Activated CD4-positive, alpha-beta memory T cell treated with anti-CD3 and anti-CD28 coated beads, Interleukin-2, amount 10 ng/mL, durations not matched to agents 7 days and 5 days (primary cell): ENCODE measurements at regions of chr1 and their contacts with region 1.

Region 1: GRCh38 chr1:203267347-203267846 is 37.9 kb upstream of the BTG2 start:
- DNase-seq: peak; percentile 86
- H3K4me3 Mint-ChIP-seq: peak overlapping the region; percentile 76
- H3K27ac Mint-ChIP-seq: peak overlapping the region; percentile 55
- H3K4me1 Mint-ChIP-seq: peaks cover 22% of the 10 kb centered on the region
- H3K27me3 Mint-ChIP-seq: peaks cover 6% of the 10 kb centered on the region

Region 2: GRCh38 chr1:203351037-203352013 is 83.9 kb after region 1 on chr1 and contains the start of gene FMOD:
- CTCF ChIA-PET with region 1: interaction called, 512 read pairs
- POLR2A ChIA-PET with region 1: no interaction called
- DNase-seq: no peak
- H3K4me3 Mint-ChIP-seq: no peak within 1 kb of the TSS
- H3K27ac Mint-ChIP-seq: no peak within 1 kb of the TSS
- H3K4me1 Mint-ChIP-seq: peaks cover 2% of the 10 kb centered on the region
- H3K27me3 Mint-ChIP-seq: peaks cover 36% of the 10 kb centered on the region
- total RNA-seq, gene FMOD: 0.23 to 0.45 TPM

Region 3: DNA sequence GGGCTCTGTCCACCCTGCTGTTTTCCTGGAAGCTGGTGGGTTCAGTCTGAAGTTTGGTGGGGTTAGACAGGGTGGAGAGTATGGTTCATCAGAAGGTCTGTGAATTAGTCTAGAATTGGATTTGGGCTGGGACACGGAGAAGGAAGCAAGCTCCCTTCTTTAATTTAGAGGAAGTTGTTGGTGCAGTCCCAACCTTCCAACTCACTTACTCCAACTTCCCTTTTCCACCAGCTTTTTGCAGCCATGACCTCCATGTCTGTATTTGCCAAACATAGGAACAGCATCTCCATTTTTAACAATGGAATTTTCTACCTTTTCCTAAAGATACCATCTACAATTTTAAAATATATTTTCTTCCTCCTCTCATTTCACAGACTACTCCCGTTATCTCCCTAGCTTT is 179.8 kb after region 1 on chr1:
- CTCF ChIA-PET with region 1: interaction called, 10 read pairs
- POLR2A ChIA-PET with region 1: no interaction called
- DNase-seq: no peak
- H3K4me3 Mint-ChIP-seq: no peak overlapping the region
- H3K27ac Mint-ChIP-seq: no peak overlapping the region
- H3K4me1 Mint-ChIP-seq: no peaks in the 10 kb centered on the region
- H3K27me3 Mint-ChIP-seq: peaks cover 50% of the 10 kb centered on the region

Region 4: DNA sequence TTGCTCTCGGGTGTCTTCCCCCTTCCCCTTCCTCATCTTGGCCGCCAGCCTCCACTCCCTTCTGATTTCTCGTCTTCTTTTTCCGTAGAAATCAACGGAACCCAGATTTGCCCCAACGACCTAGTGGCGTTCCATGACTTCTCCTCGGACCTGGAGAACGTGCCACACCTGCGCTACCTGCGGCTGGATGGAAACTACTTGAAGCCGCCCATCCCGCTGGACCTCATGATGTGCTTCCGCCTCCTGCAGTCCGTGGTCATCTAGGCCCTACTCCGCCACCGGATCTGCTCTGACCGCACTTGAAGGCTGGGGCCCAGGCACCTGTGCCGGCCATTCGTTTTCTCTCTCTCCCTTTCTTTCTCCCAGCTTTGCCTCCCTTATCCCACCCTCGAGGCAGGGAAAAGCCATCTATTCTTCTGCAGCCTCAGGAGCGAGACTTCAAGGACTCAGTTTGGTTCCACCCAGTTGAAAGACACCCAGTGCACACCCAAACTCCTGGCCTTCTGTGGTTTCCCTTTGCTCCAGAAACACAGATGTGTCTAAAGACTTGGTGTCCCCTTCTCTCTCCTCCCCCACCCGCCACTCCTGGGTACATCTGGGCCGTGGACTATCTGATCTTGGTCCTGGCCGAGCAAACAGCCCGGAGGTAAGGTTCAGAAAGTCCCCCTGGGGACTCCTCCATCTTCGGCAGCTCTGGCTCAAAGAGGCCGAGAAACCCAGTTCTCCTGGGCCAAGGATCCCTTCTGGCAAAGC is 219.4 kb after region 1 on chr1:
- CTCF ChIA-PET with region 1: interaction called, 149 read pairs
- POLR2A ChIA-PET with region 1: interaction called, 8 read pairs
- DNase-seq: no peak
- H3K4me3 Mint-ChIP-seq: peak overlapping the region; percentile 57
- H3K27ac Mint-ChIP-seq: peak overlapping the region; percentile 46
- H3K4me1 Mint-ChIP-seq: peaks cover 9% of the 10 kb centered on the region
- H3K27me3 Mint-ChIP-seq: peaks cover 9% of the 10 kb centered on the region

Region 5: DNA sequence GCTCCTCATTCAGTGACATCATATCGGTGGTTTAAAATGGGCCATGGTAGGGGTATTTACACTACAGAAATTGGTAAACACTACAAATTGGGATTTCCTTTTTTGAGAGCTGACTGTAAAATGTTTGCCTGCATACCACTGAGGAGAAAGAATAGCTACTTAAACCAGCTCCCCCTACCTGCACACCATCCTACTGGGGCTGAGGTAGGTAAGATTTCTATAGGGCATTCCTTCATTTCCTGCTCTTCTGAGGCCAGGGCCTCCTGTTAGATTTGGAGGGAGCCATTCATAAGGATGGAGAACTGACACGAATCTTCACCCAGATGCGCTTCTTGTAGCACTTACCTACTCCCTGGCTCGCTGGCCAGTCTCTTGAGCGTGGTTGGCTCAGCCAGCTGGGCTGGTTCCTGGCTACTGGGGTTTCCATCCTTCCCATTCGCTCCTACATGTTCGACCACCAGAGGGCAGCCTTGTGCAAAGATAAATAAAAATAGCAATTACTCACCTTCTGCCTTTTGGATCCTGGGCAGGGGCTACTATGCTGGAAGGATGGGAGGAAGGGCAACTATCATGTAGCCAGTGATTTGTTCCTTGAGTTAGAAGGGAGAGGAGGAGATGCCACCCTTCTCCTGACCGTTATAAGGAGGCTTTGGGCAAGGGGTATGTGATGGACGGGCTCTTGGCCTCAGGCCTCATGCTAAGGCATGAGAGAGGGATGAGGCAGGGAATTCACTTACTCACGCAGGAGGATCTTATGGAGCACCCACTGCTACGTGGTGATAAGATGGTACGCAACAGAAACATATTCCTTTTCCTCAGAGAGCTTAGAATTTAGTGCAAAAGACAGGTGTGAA is 237.2 kb after region 1 on chr1:
- CTCF ChIA-PET with region 1: interaction called, 11 read pairs
- POLR2A ChIA-PET with region 1: no interaction called
- DNase-seq: peak; percentile 79
- H3K4me3 Mint-ChIP-seq: no peak overlapping the region
- H3K27ac Mint-ChIP-seq: no peak overlapping the region
- H3K4me1 Mint-ChIP-seq: no peaks in the 10 kb centered on the region
- H3K27me3 Mint-ChIP-seq: peaks cover 15% of the 10 kb centered on the region